Activated CD4-positive, alpha-beta T cell treated with anti-CD3 and anti-CD28 coated beads, Interleukin-2, amount 10 ng/mL, durations not matched to agents 24 days and 14 days (primary cell): ENCODE measurements at regions of chr6 and their contacts with region 1.

Region 1: GRCh38 chr6:27772261-27773001 is 139.8 kb downstream of the OR2B2 start:
- DNase-seq: peak; percentile 96
- H3K4me3 Mint-ChIP-seq: peak overlapping the region; percentile 55
- H3K27ac Mint-ChIP-seq: peak overlapping the region; percentile 23
- H3K4me1 Mint-ChIP-seq: peaks cover 14% of the 10 kb centered on the region
- H3K27me3 Mint-ChIP-seq: peaks cover 21% of the 10 kb centered on the region

Region 2: GRCh38 chr6:27795697-27796494 is 23.5 kb after region 1 on chr6:
- intact Hi-C with region 1: loop called (anchors 1 kb)
- DNase-seq: peak; percentile 93
- H3K4me3 Mint-ChIP-seq: peak overlapping the region; percentile 3
- H3K27ac Mint-ChIP-seq: peak overlapping the region; percentile 54
- H3K4me1 Mint-ChIP-seq: peaks cover 37% of the 10 kb centered on the region
- H3K27me3 Mint-ChIP-seq: peaks cover 20% of the 10 kb centered on the region